Endothelial cell of umbilical vein (primary cell): ENCODE measurements at regions of chr4 and their contacts with region 1.

Region 1: GRCh38 chr4:155066871-155067270 is 141.6 kb upstream of the NPY2R start:
- DNase-seq: no peak
- H3K4me3 ChIP-seq: no peak overlapping the region
- H3K27ac ChIP-seq: no peak overlapping the region
- H3K4me1 ChIP-seq: no peaks in the 10 kb centered on the region
- H3K27me3 ChIP-seq: no peaks in the 10 kb centered on the region
- CTCF ChIP-seq: no peak
- POLR2A ChIP-seq: no peak

Region 2: DNA sequence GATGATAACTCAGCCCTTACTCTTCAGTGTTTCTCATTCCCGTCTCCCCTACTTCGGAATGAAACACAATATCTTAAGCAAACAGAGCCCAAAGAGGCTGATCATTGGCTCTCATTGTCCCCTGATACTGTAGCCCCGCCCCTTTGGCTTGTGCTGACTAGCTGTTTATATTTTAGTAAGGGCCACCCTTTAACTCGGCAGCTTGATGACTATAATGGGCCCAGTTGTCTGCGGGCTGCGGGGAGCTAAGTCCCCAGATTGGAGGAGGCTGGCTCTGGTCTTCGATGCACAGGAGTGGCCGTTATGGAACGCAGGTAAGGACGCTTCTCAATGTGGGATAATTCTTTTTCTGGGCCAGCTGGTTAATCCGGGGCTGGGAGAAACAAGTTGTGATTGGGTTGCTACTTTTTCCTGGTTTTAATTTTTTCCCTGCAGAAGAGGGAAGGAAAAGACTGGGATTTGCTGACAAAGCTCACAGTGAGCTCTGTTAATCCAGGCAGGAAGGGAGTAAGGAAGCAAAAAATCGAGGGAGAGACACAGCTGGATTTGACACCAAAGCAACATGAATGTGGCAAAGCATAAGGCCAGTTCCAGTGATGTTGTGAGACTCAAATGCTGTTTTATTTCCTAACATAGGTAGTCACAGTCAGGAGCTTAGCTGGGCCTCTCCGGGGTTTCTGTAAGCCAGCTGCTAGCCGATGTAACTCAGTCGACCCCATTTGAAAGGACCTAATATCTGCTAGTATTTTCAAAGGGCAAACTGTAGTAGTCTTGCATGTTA is 1862.4 kb before region 1 on chr4 and contains the start of gene TRIM2:
- CTCF ChIA-PET with region 1: no interaction called
- POLR2A ChIA-PET with region 1: no interaction called
- dilution Hi-C with region 1: no loop called
- intact Hi-C with region 1: no loop called
- DNase-seq: peak; percentile 67
- H3K4me3 ChIP-seq: no peak within 1 kb of the TSS
- H3K27ac ChIP-seq: no peak within 1 kb of the TSS
- H3K4me1 ChIP-seq: peaks cover 2% of the 10 kb centered on the region
- H3K27me3 ChIP-seq: no peaks in the 10 kb centered on the region
- CTCF ChIP-seq: no peak
- POLR2A ChIP-seq: no peak
- total RNA-seq, gene TRIM2: 16.4 and 19.7 TPM in 2 replicates

Region 3: GRCh38 chr4:154854362-154854761 is 212.5 kb before region 1 on chr4:
- CTCF ChIA-PET with region 1: no interaction called
- POLR2A ChIA-PET with region 1: no interaction called
- dilution Hi-C with region 1: no loop called
- intact Hi-C with region 1: no loop called
- DNase-seq: no peak
- H3K4me3 ChIP-seq: no peak overlapping the region
- H3K27ac ChIP-seq: no peak overlapping the region
- H3K4me1 ChIP-seq: no peaks in the 10 kb centered on the region
- H3K27me3 ChIP-seq: no peaks in the 10 kb centered on the region
- CTCF ChIP-seq: no peak
- POLR2A ChIP-seq: no peak

Region 4: DNA sequence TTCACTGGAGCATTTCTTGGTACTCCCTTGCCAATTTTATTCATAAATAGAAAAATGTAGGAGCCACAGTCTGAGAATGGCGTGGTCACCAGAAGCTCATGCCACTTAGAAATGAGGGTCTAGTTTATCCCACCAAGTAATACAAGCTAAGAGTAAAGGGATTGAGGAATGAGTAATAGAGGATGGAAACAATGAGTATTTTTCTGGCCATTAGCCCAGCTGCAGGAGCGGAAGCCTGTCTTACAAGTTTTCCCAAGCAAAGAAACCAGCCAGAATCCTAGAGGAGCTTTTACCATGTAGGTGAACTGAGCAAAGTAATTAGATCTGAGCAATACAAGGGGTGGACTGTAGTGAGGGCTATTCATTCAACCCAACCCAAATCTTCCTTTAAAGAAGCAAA is 19.1 kb before region 1 on chr4:
- CTCF ChIA-PET with region 1: interaction called, 5 read pairs
- POLR2A ChIA-PET with region 1: no interaction called
- dilution Hi-C with region 1: no loop called
- intact Hi-C with region 1: loop called (anchors 2 kb)
- DNase-seq: peak; percentile 94
- H3K4me3 ChIP-seq: no peak overlapping the region
- H3K27ac ChIP-seq: peak overlapping the region; percentile 38
- H3K4me1 ChIP-seq: peaks cover 12% of the 10 kb centered on the region
- H3K27me3 ChIP-seq: no peaks in the 10 kb centered on the region
- CTCF ChIP-seq: no peak
- POLR2A ChIP-seq: no peak